Left ventricle myocardium superior (tissue), 1 donor: ENCODE measurements at regions of chr14 and their contacts with region 1.

Region 1: DNA sequence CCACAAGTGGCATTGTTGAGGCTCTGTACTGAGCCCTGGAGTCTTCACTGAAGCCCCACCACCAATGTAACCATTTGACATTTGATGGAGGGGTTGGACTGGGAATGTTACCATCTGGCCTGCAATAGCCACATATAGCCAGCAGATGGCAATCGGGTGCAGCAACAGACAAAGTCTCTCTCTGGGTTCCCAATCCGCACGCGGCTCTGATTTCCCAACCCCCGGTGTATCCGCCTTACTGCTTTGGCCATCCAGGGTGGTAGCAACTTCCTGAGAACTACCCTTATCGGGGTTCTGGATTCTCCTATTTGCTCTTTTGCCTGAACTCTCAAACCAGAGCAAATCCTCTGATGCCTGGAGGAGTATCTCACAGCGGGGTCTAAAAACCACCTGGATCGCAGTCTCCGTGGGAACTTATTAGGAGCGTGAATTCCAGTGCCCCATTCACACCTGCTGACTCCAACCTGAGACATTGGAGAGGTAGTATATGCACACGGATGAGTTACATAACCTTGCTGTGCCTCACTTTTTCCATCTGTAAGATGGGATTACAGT is 14.2 kb downstream of the VRTN start:
- DNase-seq: peak; percentile 82
- ATAC-seq: peak; percentile 93

Region 2: GRCh38 chr14:74478996-74479635 is 116.7 kb after region 1 on chr14:
- intact Hi-C with region 1: loop called (anchors 5 kb)
- DNase-seq: no peak
- ATAC-seq: no peak

Region 3: DNA sequence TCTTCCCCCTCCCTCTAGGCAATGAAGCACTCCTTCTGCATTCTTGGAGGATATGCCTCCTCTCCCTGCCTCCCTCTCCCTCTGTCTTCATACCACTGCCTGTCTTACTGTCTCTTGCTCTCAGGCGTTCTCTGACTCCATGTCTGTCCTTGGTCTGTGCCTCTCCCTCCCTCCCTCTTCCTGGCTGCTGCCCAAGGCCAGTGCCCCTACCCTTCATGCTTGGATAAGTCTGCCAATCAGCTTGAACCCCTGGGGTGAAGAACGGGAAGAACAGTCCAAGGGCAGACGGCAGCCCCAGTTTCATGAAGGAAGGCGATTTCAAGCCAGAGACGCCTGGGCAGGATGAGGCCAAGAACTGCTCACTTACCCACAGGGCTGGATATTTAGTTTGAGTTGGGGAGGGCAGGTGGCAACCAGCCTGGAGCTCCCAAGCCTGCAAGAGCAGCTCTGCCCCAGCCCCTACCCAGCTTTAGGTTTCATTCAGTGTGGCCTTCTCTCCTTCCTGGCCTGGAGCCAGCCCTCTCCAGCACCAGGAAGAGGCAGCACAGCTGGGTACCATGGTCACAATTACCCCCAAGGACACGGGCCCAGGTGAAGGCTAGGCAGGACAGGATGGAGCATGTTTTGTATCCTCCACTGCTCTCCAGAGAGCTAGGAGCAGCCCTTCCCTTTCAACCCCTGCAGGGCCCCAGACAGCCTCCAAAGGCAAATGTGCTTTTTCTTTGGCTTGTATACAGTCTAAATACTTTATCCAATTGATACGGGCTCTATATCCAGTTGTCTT is 285.4 kb after region 1 on chr14:
- intact Hi-C with region 1: no loop called
- DNase-seq: no peak
- ATAC-seq: peak; percentile 4